GM12878 (cell line): ENCODE measurements at regions of chr11 and their contacts with region 1.

Region 1: DNA sequence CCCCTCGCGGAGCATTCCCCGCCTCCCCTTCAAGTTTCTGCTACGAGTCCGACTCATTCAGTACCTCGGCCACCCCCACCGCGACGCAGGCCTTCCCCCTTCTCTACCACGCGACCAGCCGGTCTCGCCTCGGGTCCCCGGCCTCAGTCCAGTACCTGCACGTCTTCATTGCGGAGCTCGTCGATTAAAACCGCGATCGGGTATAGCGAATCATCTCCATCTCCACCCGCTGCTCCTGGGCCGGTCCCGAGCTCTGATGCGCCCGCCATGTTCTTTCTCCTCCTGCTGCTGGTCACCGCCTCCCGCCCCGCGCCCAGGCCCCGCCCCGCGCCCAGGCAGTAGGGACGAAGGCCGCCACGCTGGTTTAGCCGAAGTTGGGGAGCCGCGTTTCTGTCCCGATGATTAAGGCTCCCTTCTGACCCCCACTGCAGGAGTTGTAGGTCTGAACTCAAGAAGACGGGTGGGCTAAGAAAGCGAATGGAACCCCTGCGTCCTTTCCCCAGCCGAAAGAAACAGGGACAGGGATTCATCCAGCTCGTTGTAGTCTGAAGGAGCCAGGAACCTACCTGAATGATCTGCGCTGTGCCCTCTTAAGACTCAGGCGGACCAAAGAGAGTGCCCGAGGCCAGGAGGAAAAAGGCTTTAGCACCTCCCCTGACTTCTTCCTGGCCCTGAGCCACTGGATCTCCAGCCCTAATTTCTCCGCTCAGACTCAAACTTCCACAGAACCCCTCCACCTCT is at the start of gene PPP2R1B:
- DNase-seq: peak; percentile 35
- ATAC-seq: peak; percentile 97
- H3K4me3 ChIP-seq: peak within 1 kb of the TSS; percentile 78
- H3K27ac ChIP-seq: peak within 1 kb of the TSS; percentile 77
- H3K4me1 ChIP-seq: no peaks in the 10 kb centered on the region; the same call in 1 of the 2 replicates
- H3K27me3 ChIP-seq: no peaks in the 10 kb centered on the region
- CTCF ChIP-seq: no peak
- EP300 ChIP-seq: no peak
- POLR2A ChIP-seq: peak; percentile 89
- RAD21 ChIP-seq: no peak
- polyA plus RNA-seq, gene PPP2R1B: 28.5 to 37.0 TPM

Region 2: DNA sequence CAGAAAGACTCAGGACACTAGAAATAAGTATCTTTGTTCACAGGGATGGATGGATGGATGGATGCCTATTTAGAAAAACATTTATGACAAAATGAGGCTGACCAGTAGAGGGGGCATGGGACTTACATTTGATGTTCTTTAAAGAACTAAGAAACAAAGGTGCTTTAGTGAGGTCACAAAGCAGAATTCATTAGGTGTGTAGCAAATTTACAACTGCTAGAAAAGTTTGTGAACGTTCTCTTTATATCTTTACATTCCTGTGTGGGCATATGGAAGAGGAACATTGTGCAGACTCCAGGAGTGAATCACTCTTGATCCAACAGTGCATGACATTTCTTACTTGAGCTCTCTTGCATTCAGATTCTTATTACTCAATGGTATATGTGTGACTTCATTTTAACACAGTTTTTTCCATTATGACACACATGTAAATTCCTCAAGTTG is 179.9 kb before region 1 on chr11:
- CTCF ChIA-PET with region 1: interaction called, 6 read pairs
- POLR2A ChIA-PET with region 1: interaction called, 3 read pairs
- RAD21 ChIA-PET with region 1: interaction called, 25 read pairs
- SMC1A ChIA-PET with region 1: interaction called, 18 read pairs
- in situ Hi-C with region 1: no loop called
- intact Hi-C with region 1: no loop called
- DNase-seq: no peak
- ATAC-seq: peak; percentile 84
- H3K4me3 ChIP-seq: no peak overlapping the region
- H3K27ac ChIP-seq: no peak overlapping the region
- H3K4me1 ChIP-seq: no peaks in the 10 kb centered on the region; the same call in 1 of the 2 replicates
- H3K27me3 ChIP-seq: no peaks in the 10 kb centered on the region; a peak in 1 of 4 replicates
- CTCF ChIP-seq: peak; percentile 53 to 74 (median 67)
- EP300 ChIP-seq: no peak
- POLR2A ChIP-seq: no peak
- RAD21 ChIP-seq: peak; percentile 79

Region 3: GRCh38 chr11:111745719-111746504 is 20.4 kb before region 1 on chr11:
- CTCF ChIA-PET with region 1: interaction called, 6 read pairs
- POLR2A ChIA-PET with region 1: interaction called, 4 read pairs
- RAD21 ChIA-PET with region 1: interaction called, 12 read pairs
- SMC1A ChIA-PET with region 1: interaction called, 36 read pairs
- in situ Hi-C with region 1: no loop called
- intact Hi-C with region 1: no loop called
- DNase-seq: no peak
- ATAC-seq: no peak
- H3K4me3 ChIP-seq: no peak overlapping the region
- H3K27ac ChIP-seq: no peak overlapping the region
- H3K4me1 ChIP-seq: peaks cover 2% of the 10 kb centered on the region; the same call in 1 of the 2 replicates
- H3K27me3 ChIP-seq: no peaks in the 10 kb centered on the region
- CTCF ChIP-seq: no peak
- EP300 ChIP-seq: no peak
- POLR2A ChIP-seq: no peak
- RAD21 ChIP-seq: no peak